Sigmoid colon (tissue), 7 donors: ENCODE measurements at regions of chr1 and their contacts with region 1.

Region 1: GRCh38 chr1:237677979-237678378 is 212.7 kb downstream of the ZP4 start:
- DNase-seq: no peak
- H3K4me3 ChIP-seq: no peak overlapping the region
- H3K27ac ChIP-seq: peak overlapping the region in 1 of 4 donors; percentile 9
- H3K4me1 ChIP-seq: peaks cover 0 to 18% (median 8%) of the 10 kb centered on the region in 4 donors
- H3K27me3 ChIP-seq: no peaks in the 10 kb centered on the region
- CTCF ChIP-seq: peak in 3 of 4 experiments; percentile 19 to 30 (median 24)
- EP300 ChIP-seq: no peak
- POLR2A ChIP-seq: no peak

Region 2: GRCh38 chr1:237470712-237471310 is 207.2 kb before region 1 on chr1:
- intact Hi-C with region 1: no loop called
- DNase-seq: no peak
- H3K4me3 ChIP-seq: no peak overlapping the region
- H3K27ac ChIP-seq: no peak overlapping the region
- H3K4me1 ChIP-seq: no peaks in the 10 kb centered on the region
- H3K27me3 ChIP-seq: no peaks in the 10 kb centered on the region
- CTCF ChIP-seq: no peak
- EP300 ChIP-seq: no peak
- POLR2A ChIP-seq: no peak

Region 3: DNA sequence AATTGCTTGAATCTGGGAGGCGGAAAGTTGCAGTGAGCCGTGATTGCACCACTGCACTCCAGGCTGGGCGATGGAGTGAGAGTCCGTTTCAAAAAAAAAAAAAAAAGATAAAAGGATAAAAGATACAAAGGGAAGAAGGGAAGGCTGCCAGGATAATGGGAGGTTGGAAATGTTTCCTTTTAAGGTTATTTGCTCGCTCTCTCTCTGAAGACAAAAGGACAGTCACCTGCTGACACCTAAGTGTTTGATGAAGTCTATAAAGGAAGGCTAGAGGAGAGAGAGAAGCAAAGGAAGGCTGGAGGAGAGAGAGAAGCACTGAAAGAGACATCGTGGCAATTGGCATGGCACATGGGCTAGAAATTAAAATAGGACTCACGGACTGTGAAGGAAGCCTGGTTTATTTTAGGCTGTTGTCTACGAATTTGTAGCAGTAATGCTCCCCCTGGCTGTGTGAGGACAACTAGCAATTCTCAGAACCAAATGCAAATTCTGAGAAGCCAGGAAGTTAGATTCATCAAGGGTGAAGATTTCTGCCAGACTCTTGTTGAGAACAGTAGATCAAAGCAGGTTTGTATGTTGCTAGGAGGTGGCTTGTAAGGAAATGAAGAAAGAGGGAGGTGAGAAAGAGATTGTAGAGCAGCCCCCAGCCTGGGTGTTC is 58.5 kb after region 1 on chr1:
- intact Hi-C with region 1: loop called (anchors 2 kb)
- DNase-seq: no peak
- H3K4me3 ChIP-seq: peak overlapping the region in 1 of 4 donors; percentile 27
- H3K27ac ChIP-seq: peak overlapping the region in 2 of 4 donors; percentile 39 to 67
- H3K4me1 ChIP-seq: peaks cover 0 to 4% (median 0%) of the 10 kb centered on the region in 4 donors
- H3K27me3 ChIP-seq: no peaks in the 10 kb centered on the region
- CTCF ChIP-seq: peak in 3 of 4 experiments; percentile 37 to 53 (median 50)
- EP300 ChIP-seq: no peak
- POLR2A ChIP-seq: no peak